ENCODE measurements at regions of chr14 and their contacts with region 1.

Region 1: GRCh38 chr14:102096214-102097114 is 9.6 kb upstream of the HSP90AA1 start:
- DNase-seq: peak; percentile 51 to 82 (median 63)
- H3K4me3 ChIP-seq: no peak overlapping the region
- H3K4me3 Mint-ChIP-seq: no peak overlapping the region
- H3K27ac ChIP-seq: no peak overlapping the region
- H3K27ac Mint-ChIP-seq: peak overlapping the region in 2 of 8 donors; percentile 82 to 95
- H3K4me1 ChIP-seq: peaks cover 4% of the 10 kb centered on the region
- H3K4me1 Mint-ChIP-seq: peaks cover 3 to 4% (median 4%) of the 10 kb centered on the region in 3 donors
- H3K27me3 ChIP-seq: no peaks in the 10 kb centered on the region
- H3K27me3 Mint-ChIP-seq: no peaks in the 10 kb centered on the region

Region 2: DNA sequence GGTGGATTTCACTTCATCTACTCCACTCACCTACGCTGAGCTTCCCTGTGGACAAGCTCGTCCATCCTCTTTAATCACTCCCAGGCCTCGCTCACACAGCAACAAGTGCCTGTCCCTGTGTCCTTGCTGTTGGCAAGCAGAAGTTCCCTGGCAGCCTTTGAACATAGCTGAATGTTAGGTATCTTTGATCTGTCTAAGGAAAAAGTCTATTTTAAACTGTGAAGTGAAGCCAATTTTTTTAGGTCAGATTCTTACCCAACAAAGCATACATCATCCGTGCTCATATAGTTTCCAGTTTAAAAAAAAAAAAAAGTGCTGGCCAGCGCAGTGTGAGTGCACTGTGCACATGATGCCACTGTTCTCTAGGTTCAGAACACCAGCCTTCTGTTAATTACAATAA is 298.6 kb before region 1 on chr14:
- CTCF ChIA-PET with region 1: no interaction called
- POLR2A ChIA-PET with region 1: no interaction called
- DNase-seq: no peak
- H3K4me3 ChIP-seq: no peak overlapping the region
- H3K4me3 Mint-ChIP-seq: peak overlapping the region in 1 of 7 donors; percentile 36
- H3K27ac ChIP-seq: no peak overlapping the region
- H3K27ac Mint-ChIP-seq: peak overlapping the region in 2 of 8 donors; percentile 14 to 24
- H3K4me1 ChIP-seq: no peaks in the 10 kb centered on the region
- H3K4me1 Mint-ChIP-seq: peaks cover 10 to 34% (median 14%) of the 10 kb centered on the region in 3 donors
- H3K27me3 ChIP-seq: no peaks in the 10 kb centered on the region
- H3K27me3 Mint-ChIP-seq: no peaks in the 10 kb centered on the region

Region 3: DNA sequence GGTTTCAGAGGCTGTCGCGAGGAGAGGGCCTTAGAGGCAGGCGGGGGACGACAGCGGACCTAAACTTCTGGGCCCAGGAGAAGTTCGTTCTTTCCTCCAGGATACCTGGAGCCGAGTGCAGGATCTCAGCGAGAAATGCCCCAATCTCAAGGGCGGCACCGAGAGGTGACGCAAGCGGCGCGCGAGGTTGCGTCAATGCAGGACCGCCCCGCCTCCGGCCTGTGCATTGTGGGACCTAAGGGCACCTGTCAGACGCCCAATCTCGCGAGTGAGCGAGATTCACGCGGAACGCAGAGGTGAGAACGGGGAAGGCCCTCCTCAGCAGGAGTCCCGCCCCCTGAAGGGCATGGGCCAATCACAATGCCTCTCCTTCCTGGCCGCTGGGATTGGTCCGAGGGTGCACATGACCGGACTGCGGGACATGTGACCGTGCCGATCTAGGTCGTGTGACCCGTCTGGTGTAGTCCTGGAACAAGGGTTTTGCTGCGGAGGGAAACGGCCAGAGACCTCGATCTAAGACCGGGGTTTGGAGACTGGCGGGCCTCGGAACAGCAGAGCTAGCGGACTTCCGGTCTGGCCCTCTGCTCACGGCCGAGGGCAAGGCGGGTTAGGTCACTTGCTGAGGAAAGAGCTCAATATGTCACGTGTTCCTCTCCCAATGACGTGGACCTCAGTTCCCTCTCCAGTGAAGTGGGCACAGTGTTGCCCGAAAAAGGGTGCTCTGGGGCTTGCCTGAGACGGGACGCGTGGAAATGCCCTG is 148.4 kb before region 1 on chr14:
- CTCF ChIA-PET with region 1: no interaction called
- POLR2A ChIA-PET with region 1: interaction called, 10 read pairs
- DNase-seq: peak; percentile 99 to 100 (median 100)
- H3K4me3 ChIP-seq: peak overlapping the region; percentile 96
- H3K4me3 Mint-ChIP-seq: peak overlapping the region; percentile 88 to 98 (median 96)
- H3K27ac ChIP-seq: peak overlapping the region; percentile 94
- H3K27ac Mint-ChIP-seq: peak overlapping the region; percentile 98 to 100 (median 100)
- H3K4me1 ChIP-seq: peaks cover 13% of the 10 kb centered on the region
- H3K4me1 Mint-ChIP-seq: peaks cover 22 to 26% (median 25%) of the 10 kb centered on the region in 3 donors
- H3K27me3 ChIP-seq: no peaks in the 10 kb centered on the region
- H3K27me3 Mint-ChIP-seq: peaks cover 7 to 29% of the 10 kb centered on the region in 2 donors

Region 4: DNA sequence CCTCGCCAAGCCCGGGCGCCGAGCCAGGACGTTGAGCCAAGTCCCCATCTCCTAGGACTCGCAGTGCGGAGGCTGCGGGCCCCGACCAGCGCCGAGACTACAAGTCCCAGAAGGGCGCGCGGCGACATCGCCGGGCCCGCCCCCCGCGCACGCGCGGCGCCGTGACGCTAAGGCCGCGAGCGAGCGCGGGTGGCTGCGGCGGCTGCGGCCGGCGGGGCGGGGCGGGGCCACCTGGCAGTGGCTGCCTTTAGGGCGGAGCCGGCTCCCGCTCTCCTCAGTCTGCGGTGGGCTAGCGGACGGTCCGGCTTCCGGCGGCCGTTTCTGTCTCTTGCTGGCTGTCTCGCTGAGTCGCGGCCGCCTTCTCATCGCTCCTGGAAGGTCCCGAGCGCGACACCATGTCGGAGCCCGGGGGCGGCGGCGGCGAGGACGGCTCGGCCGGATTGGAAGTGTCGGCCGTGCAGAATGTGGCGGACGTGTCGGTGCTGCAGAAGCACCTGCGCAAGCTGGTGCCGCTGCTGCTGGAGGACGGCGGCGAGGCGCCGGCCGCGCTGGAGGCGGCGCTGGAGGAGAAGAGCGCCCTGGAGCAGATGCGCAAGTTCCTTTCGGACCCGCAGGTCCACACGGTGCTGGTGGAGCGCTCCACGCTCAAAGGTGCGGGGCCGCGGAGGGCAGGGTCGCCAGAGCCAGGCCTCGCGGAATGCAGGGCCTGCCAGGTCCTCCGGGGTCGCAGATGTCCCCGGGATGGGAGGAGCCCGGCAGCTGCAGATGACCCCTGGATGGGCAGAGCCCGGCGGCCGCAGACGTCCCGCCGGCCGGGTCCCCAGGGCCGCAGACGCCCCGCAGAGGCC is 131.9 kb before region 1 on chr14 and contains the start of gene DYNC1H1:
- CTCF ChIA-PET with region 1: interaction called, 18 read pairs
- POLR2A ChIA-PET with region 1: no interaction called
- DNase-seq: peak; percentile 87 to 92 (median 88)
- H3K4me3 ChIP-seq: peak within 1 kb of the TSS; percentile 81
- H3K4me3 Mint-ChIP-seq: peak within 1 kb of the TSS; percentile 88 to 98 (median 93)
- H3K27ac ChIP-seq: peak within 1 kb of the TSS; percentile 83
- H3K27ac Mint-ChIP-seq: peak within 1 kb of the TSS; percentile 80 to 96 (median 92)
- H3K4me1 ChIP-seq: peaks cover 33% of the 10 kb centered on the region
- H3K4me1 Mint-ChIP-seq: peaks cover 43 to 62% (median 60%) of the 10 kb centered on the region in 3 donors
- H3K27me3 ChIP-seq: no peaks in the 10 kb centered on the region
- H3K27me3 Mint-ChIP-seq: peaks cover 0 to 3% of the 10 kb centered on the region in 2 donors
- total RNA-seq, gene DYNC1H1: 241 to 249 TPM

Region 5: DNA sequence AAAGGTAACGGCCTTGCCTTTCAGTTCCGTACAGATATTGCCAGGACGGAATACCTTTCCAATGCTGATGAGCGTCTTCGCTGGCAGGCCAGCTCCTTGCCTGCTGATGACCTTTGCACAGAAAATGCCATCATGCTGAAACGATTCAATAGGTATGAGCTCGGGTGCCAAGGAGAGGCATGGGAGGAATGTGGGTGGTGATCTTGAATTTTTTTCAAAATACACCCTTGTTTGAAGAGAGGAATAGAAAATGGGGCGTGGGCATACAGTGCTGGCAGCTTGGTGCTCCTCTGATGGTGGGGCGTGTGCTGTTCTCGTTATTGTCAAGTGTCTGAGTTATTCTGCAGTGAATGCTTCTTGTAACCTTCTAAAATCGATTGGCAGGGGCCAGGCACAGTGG is 62.2 kb before region 1 on chr14:
- CTCF ChIA-PET with region 1: interaction called, 13 read pairs
- POLR2A ChIA-PET with region 1: no interaction called
- DNase-seq: no peak
- H3K4me3 ChIP-seq: no peak overlapping the region
- H3K4me3 Mint-ChIP-seq: no peak overlapping the region
- H3K27ac ChIP-seq: no peak overlapping the region
- H3K27ac Mint-ChIP-seq: no peak overlapping the region
- H3K4me1 ChIP-seq: no peaks in the 10 kb centered on the region
- H3K4me1 Mint-ChIP-seq: no peaks in the 10 kb centered on the region
- H3K27me3 ChIP-seq: no peaks in the 10 kb centered on the region
- H3K27me3 Mint-ChIP-seq: no peaks in the 10 kb centered on the region

Region 6: GRCh38 chr14:102046343-102047278 is 49.9 kb before region 1 on chr14:
- CTCF ChIA-PET with region 1: interaction called, 11 read pairs
- POLR2A ChIA-PET with region 1: no interaction called
- DNase-seq: peak in 2 of 5 donors; percentile 9 to 19
- H3K4me3 ChIP-seq: no peak overlapping the region
- H3K4me3 Mint-ChIP-seq: no peak overlapping the region
- H3K27ac ChIP-seq: no peak overlapping the region
- H3K27ac Mint-ChIP-seq: peak overlapping the region in 2 of 8 donors; percentile 63
- H3K4me1 ChIP-seq: no peaks in the 10 kb centered on the region
- H3K4me1 Mint-ChIP-seq: no peaks in the 10 kb centered on the region
- H3K27me3 ChIP-seq: no peaks in the 10 kb centered on the region
- H3K27me3 Mint-ChIP-seq: no peaks in the 10 kb centered on the region

Region 7: GRCh38 chr14:102063091-102063802 is 33.2 kb before region 1 on chr14:
- CTCF ChIA-PET with region 1: interaction called, 56 read pairs
- POLR2A ChIA-PET with region 1: no interaction called
- DNase-seq: peak; percentile 55 to 82 (median 65)
- H3K4me3 ChIP-seq: no peak overlapping the region
- H3K4me3 Mint-ChIP-seq: no peak overlapping the region
- H3K27ac ChIP-seq: no peak overlapping the region
- H3K27ac Mint-ChIP-seq: no peak overlapping the region
- H3K4me1 ChIP-seq: peaks cover 1% of the 10 kb centered on the region
- H3K4me1 Mint-ChIP-seq: peaks cover 10 to 19% (median 18%) of the 10 kb centered on the region in 3 donors
- H3K27me3 ChIP-seq: no peaks in the 10 kb centered on the region
- H3K27me3 Mint-ChIP-seq: no peaks in the 10 kb centered on the region

Region 8: GRCh38 chr14:102316743-102317563 is 220.5 kb after region 1 on chr14:
- CTCF ChIA-PET with region 1: interaction called, 10 read pairs
- POLR2A ChIA-PET with region 1: no interaction called
- DNase-seq: peak; percentile 92 to 97 (median 94)
- H3K4me3 ChIP-seq: peak overlapping the region; percentile 49
- H3K4me3 Mint-ChIP-seq: peak overlapping the region; percentile 94 to 99 (median 96)
- H3K27ac ChIP-seq: peak overlapping the region; percentile 36
- H3K27ac Mint-ChIP-seq: peak overlapping the region; percentile 93 to 99 (median 98)
- H3K4me1 ChIP-seq: peaks cover 39% of the 10 kb centered on the region
- H3K4me1 Mint-ChIP-seq: peaks cover 38 to 72% (median 64%) of the 10 kb centered on the region in 3 donors
- H3K27me3 ChIP-seq: no peaks in the 10 kb centered on the region
- H3K27me3 Mint-ChIP-seq: peaks cover 0 to 8% of the 10 kb centered on the region in 2 donors

Region 9: GRCh38 chr14:102387086-102387485 is 290.6 kb after region 1 on chr14:
- CTCF ChIA-PET with region 1: no interaction called
- POLR2A ChIA-PET with region 1: no interaction called
- DNase-seq: no peak
- H3K4me3 ChIP-seq: no peak overlapping the region
- H3K4me3 Mint-ChIP-seq: no peak overlapping the region
- H3K27ac ChIP-seq: no peak overlapping the region
- H3K27ac Mint-ChIP-seq: no peak overlapping the region
- H3K4me1 ChIP-seq: no peaks in the 10 kb centered on the region
- H3K4me1 Mint-ChIP-seq: no peaks in the 10 kb centered on the region
- H3K27me3 ChIP-seq: no peaks in the 10 kb centered on the region
- H3K27me3 Mint-ChIP-seq: no peaks in the 10 kb centered on the region

Measured in CD8-positive, alpha-beta memory T cell (primary cell).